B cell (primary cell): ENCODE measurements at regions of chr1 and their contacts with region 1.

Region 1: GRCh38 chr1:33295450-33296081 is 25.3 kb downstream of the A3GALT2 start:
- DNase-seq: peak; percentile 86
- ATAC-seq: peak; percentile 91
- H3K4me3 ChIP-seq: no peak overlapping the region
- H3K4me3 Mint-ChIP-seq: no peak overlapping the region
- H3K27ac ChIP-seq: no peak overlapping the region
- H3K27ac Mint-ChIP-seq: peak overlapping the region; percentile 20
- H3K4me1 ChIP-seq: no peaks in the 10 kb centered on the region
- H3K4me1 Mint-ChIP-seq: no peaks in the 10 kb centered on the region
- H3K27me3 ChIP-seq: no peaks in the 10 kb centered on the region
- H3K27me3 Mint-ChIP-seq: no peaks in the 10 kb centered on the region
- CTCF ChIP-seq: peak; percentile 93

Region 2: DNA sequence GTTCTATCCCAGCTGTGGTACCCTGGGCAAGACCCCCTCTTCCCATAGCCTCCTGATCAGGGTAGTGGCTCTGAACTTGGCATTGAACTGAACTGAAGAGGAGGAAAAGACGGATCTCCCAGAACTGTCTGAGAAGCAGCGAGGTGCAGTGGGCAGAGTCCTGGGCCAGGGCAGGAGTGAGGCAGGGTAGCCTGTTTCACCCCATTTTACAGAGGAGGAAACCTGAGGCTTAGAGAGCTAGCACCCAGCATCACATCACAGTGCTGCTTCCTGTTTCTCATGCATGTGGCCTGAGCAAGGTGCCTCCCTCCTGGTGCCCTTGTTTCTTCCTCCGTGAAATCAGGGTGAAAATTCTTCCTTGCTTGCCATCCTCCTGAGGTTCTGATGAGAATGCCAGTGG is 22.2 kb before region 1 on chr1:
- CTCF ChIA-PET with region 1: interaction called, 19 read pairs
- POLR2A ChIA-PET with region 1: no interaction called
- intact Hi-C with region 1: no loop called
- DNase-seq: no peak
- ATAC-seq: no peak
- H3K4me3 ChIP-seq: no peak overlapping the region
- H3K4me3 Mint-ChIP-seq: no peak overlapping the region
- H3K27ac ChIP-seq: no peak overlapping the region
- H3K27ac Mint-ChIP-seq: no peak overlapping the region
- H3K4me1 ChIP-seq: peaks cover 0 to 12% of the 10 kb centered on the region in 2 donors
- H3K4me1 Mint-ChIP-seq: peaks cover 23% of the 10 kb centered on the region
- H3K27me3 ChIP-seq: no peaks in the 10 kb centered on the region
- H3K27me3 Mint-ChIP-seq: no peaks in the 10 kb centered on the region
- CTCF ChIP-seq: no peak

Region 3: DNA sequence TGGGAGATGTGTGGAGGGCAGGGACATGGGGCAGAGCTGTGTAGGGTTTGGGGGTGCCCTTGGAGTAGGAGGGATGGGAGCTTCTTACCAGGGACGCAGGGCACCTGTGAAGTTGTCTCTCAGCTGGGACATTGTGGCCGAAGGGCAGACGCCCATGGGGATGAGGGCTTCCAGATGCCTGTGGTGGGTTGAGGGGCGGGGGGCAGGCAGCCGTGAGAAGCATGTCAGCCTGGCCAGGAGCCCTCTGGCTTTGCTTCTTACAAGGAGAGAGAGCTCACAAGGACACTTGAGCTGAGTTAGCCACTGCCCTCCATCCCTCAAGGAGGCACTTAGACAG is 16.8 kb after region 1 on chr1:
- CTCF ChIA-PET with region 1: interaction called, 18 read pairs
- POLR2A ChIA-PET with region 1: no interaction called
- intact Hi-C with region 1: no loop called
- DNase-seq: no peak
- ATAC-seq: no peak
- H3K4me3 ChIP-seq: no peak overlapping the region
- H3K4me3 Mint-ChIP-seq: no peak overlapping the region
- H3K27ac ChIP-seq: no peak overlapping the region
- H3K27ac Mint-ChIP-seq: no peak overlapping the region
- H3K4me1 ChIP-seq: no peaks in the 10 kb centered on the region
- H3K4me1 Mint-ChIP-seq: no peaks in the 10 kb centered on the region
- H3K27me3 ChIP-seq: no peaks in the 10 kb centered on the region
- H3K27me3 Mint-ChIP-seq: peaks cover 15% of the 10 kb centered on the region
- CTCF ChIP-seq: no peak

Region 4: GRCh38 chr1:33367485-33368405 is 72.2 kb after region 1 on chr1:
- CTCF ChIA-PET with region 1: interaction called, 148 read pairs
- POLR2A ChIA-PET with region 1: no interaction called
- intact Hi-C with region 1: no loop called
- DNase-seq: peak; percentile 85
- ATAC-seq: peak; percentile 94
- H3K4me3 ChIP-seq: no peak overlapping the region
- H3K4me3 Mint-ChIP-seq: no peak overlapping the region
- H3K27ac ChIP-seq: no peak overlapping the region
- H3K27ac Mint-ChIP-seq: no peak overlapping the region
- H3K4me1 ChIP-seq: peaks cover 4 to 5% of the 10 kb centered on the region in 2 donors
- H3K4me1 Mint-ChIP-seq: no peaks in the 10 kb centered on the region
- H3K27me3 ChIP-seq: peaks cover 0 to 10% (median 3%) of the 10 kb centered on the region in 4 experiments
- H3K27me3 Mint-ChIP-seq: peaks cover 18% of the 10 kb centered on the region
- CTCF ChIP-seq: peak; percentile 96

Region 5: GRCh38 chr1:33472349-33472980 is 176.9 kb after region 1 on chr1 and contains the start of gene ZSCAN20:
- CTCF ChIA-PET with region 1: interaction called, 210 read pairs
- POLR2A ChIA-PET with region 1: interaction called, 3 read pairs
- intact Hi-C with region 1: no loop called
- DNase-seq: peak; percentile 86
- ATAC-seq: peak; percentile 98
- H3K4me3 ChIP-seq: peak within 1 kb of the TSS; percentile 1 to 69 (median 49)
- H3K4me3 Mint-ChIP-seq: peak within 1 kb of the TSS; percentile 88
- H3K27ac ChIP-seq: peak within 1 kb of the TSS; percentile 39 to 52
- H3K27ac Mint-ChIP-seq: peak within 1 kb of the TSS; percentile 71
- H3K4me1 ChIP-seq: peaks cover 8 to 20% of the 10 kb centered on the region in 2 donors
- H3K4me1 Mint-ChIP-seq: peaks cover 21% of the 10 kb centered on the region
- H3K27me3 ChIP-seq: no peaks in the 10 kb centered on the region
- H3K27me3 Mint-ChIP-seq: no peaks in the 10 kb centered on the region
- CTCF ChIP-seq: no peak
- total RNA-seq, gene ZSCAN20: 3.7 and 5.3 TPM in 2 replicates

Region 6: DNA sequence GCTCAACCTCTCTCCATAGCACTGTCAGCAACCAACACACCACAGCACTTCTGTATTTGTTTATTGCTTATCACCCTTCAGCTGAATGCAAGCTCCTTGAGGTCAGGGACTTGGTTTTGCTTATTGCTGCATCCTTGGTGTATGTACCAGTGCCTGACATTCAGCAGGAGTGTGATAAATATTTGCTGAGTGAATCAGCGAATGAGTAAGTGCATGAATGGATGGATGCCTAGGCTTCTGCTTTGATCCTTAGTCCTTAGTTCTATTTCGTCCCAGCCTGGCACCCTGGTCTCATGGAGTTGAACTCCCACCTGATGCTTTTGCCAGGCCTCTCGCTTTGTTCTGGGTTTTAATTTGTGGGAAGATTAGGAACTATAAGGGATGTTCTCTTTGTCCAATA is 265.1 kb after region 1 on chr1:
- CTCF ChIA-PET with region 1: no interaction called
- POLR2A ChIA-PET with region 1: no interaction called
- intact Hi-C with region 1: no loop called
- DNase-seq: no peak
- ATAC-seq: no peak
- H3K4me3 ChIP-seq: no peak overlapping the region
- H3K4me3 Mint-ChIP-seq: no peak overlapping the region
- H3K27ac ChIP-seq: no peak overlapping the region
- H3K27ac Mint-ChIP-seq: no peak overlapping the region
- H3K4me1 ChIP-seq: no peaks in the 10 kb centered on the region
- H3K4me1 Mint-ChIP-seq: no peaks in the 10 kb centered on the region
- H3K27me3 ChIP-seq: no peaks in the 10 kb centered on the region
- H3K27me3 Mint-ChIP-seq: peaks cover 26% of the 10 kb centered on the region
- CTCF ChIP-seq: no peak